ENCODE measurements at regions of chr1 and their contacts with region 1.

Region 1: DNA sequence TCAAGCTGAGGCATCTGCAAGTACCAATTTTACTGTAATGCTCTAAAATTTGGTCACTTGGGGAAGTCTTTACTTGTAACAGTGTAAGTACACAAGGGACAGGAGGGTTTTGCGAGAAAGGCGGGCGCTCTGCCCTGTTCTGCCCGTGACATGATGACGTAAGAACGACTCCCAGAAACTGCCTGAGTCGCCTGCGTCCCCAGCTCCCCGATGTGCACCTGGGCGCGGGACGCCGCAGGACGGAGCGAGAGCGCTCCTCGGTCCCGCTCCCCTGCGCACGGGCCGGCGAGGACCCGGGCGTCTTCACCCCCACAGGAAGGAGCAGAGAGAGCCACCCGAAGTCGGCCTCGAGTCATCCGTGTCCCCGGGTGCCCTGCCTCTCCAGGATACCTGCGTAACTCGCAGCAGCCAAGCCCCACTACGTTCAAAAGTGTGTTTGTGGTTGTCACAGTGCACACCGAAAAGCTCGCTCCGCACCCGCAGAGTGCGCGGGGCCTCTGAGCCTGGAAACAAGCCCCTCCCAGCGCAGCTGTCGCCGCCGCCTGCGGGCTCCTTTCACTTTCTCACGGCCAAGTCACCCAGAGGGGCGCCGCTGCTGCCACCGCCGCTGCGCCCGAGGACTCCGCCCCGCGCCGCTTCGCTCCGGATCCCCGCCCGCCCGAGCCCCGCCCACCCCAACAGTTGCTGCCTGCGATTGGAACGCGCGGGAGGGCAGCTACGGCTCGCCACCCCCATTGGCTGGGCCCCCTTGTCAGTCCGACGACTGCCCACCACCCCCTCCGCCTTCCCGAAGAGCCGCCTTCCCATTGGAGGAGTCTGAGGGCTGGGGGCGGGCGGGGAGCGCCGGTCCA is 3.2 kb upstream of the ZBTB18 start:
- DNase-seq: peak; percentile 98
- H3K4me3 Mint-ChIP-seq: peak overlapping the region; percentile 94
- H3K27ac Mint-ChIP-seq: peak overlapping the region; percentile 97
- H3K4me1 Mint-ChIP-seq: peaks cover 41% of the 10 kb centered on the region
- H3K27me3 Mint-ChIP-seq: no peaks in the 10 kb centered on the region

Region 2: DNA sequence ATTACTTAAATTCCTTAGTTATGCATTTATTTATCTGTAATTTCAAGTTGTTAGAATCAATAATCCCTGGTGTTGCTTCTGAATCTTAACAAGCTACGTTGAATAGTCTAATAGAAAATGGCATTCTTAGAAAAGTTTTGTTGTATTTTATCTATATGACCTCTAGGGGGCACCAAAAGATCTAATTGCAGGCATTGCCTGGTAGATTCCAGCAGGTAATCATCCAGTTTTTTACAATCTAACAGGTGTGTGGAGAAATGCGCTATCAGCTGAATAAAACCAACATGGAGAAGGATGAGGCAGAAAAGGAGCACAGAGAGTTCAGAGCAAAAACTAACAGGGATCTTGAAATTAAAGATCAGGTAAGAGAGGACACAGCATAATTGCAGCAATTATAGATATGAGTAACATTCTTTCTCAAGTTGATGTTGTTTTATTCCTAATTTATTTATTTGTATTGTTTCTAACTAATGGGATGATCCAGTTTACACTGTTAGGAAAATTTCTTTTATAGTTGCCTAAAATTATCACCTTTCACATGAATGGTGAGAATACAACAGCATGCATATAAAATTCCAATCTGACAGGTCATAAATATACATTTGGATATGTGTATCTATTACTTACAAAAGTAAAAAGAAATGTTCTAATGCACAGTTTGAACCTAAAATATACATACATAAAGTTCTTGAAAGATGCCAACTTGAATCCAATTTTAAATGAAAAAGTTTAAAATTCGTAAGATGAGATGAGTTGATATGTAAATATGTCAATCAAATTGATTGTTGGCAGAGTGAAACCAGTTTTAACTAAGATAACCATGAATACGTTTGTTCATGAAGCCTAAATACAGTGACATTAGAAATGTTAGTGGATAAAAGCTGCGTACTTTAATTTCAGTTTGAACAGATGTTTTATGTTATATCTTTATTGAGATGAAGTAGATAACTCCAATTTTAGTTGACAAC is 703.6 kb before region 1 on chr1:
- CTCF ChIA-PET with region 1: interaction called, 3 read pairs
- POLR2A ChIA-PET with region 1: no interaction called
- intact Hi-C with region 1: loop called (anchors 10 kb)
- DNase-seq: no peak
- H3K4me3 Mint-ChIP-seq: no peak overlapping the region
- H3K27ac Mint-ChIP-seq: no peak overlapping the region
- H3K4me1 Mint-ChIP-seq: peaks cover 2% of the 10 kb centered on the region
- H3K27me3 Mint-ChIP-seq: no peaks in the 10 kb centered on the region

Region 3: DNA sequence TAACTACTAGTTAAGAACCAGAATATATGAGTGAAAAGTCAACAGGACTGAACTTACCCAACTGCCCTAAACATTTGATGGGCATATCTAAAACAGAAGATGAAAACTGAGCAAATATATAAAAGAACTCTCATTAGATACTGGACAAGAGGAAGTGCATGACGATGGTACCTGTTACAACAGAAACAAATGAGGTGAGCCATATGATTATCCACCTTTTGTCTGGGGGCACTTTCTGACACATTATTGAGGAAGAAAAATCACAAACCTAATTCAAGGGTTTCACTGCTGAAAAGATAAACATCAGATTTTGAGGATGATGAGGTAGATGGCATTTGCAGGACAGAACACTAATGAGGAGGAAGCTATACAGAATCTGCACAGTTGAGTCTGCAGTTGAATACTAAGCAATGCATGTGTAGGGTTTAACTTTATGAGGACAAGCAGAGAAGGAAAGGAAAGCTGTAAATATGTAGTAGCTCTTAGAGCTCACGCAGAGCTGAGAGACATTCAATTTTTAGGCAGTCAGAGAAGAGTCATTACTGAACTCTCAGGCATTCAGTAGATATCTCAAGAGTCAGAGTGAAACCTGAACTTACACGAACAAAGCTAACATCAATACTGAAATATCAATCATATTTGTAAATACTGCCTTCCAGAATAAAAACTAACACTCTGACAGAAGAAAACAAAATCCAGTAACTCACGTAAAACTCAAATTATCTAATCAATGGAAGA is 459.9 kb before region 1 on chr1:
- CTCF ChIA-PET with region 1: no interaction called
- POLR2A ChIA-PET with region 1: no interaction called
- intact Hi-C with region 1: loop called (anchors 2 kb)
- DNase-seq: no peak
- H3K4me3 Mint-ChIP-seq: no peak overlapping the region
- H3K27ac Mint-ChIP-seq: peak overlapping the region; percentile 9
- H3K4me1 Mint-ChIP-seq: peaks cover 19% of the 10 kb centered on the region
- H3K27me3 Mint-ChIP-seq: no peaks in the 10 kb centered on the region

Region 4: GRCh38 chr1:244074559-244075171 is 26.8 kb after region 1 on chr1:
- CTCF ChIA-PET with region 1: interaction called, 3 read pairs
- POLR2A ChIA-PET with region 1: interaction called, 3 read pairs
- intact Hi-C with region 1: loop called (anchors 1 kb)
- DNase-seq: peak; percentile 71
- H3K4me3 Mint-ChIP-seq: peak overlapping the region; percentile 59
- H3K27ac Mint-ChIP-seq: peak overlapping the region; percentile 5
- H3K4me1 Mint-ChIP-seq: peaks cover 24% of the 10 kb centered on the region
- H3K27me3 Mint-ChIP-seq: no peaks in the 10 kb centered on the region

Region 5: DNA sequence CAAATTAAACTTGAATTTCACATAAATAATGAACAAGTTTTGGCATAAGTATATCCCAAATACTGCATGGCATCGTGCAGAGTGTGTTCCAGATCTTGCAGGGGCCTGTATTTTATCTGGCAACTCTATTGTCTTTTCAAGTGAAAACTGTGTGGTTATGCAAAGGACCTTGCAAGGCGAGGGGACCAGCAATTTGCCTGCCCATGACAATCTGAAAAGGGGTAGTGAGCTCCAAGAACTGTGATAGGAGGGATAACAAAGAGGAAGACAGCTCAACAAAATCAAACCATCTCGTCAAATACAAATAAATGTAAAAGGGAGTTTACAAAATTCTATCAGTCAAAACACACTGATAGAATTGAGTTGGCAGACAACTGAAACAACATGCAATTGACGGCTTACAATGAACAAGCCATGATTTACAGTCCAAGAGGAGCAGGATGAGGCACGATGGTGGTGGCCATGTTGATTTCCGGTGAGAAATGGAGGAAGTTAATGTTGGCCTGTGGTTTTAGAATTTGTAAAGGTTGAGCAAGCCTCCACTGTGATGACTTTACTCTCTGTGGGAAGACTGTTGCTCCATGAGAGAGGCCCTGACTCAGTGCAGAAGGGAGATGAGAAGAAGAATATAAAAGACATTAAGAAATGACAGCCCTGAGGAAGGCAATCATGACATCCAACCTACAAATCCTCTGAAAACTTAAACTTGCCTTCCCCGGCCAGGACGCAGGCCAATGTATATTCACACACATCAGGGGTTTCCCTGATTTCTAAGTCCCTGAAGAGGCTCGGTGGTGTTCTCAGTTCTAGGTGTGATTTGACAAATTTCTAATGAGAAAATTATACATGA is 271.7 kb after region 1 on chr1:
- CTCF ChIA-PET with region 1: no interaction called
- POLR2A ChIA-PET with region 1: interaction called, 3 read pairs
- intact Hi-C with region 1: loop called (anchors 1 kb)
- DNase-seq: peak; percentile 78
- H3K4me3 Mint-ChIP-seq: no peak overlapping the region
- H3K27ac Mint-ChIP-seq: peak overlapping the region; percentile 64
- H3K4me1 Mint-ChIP-seq: peaks cover 29% of the 10 kb centered on the region
- H3K27me3 Mint-ChIP-seq: no peaks in the 10 kb centered on the region

Region 6: GRCh38 chr1:244652699-244653466 is 605.0 kb after region 1 on chr1 and contains the start of gene DESI2:
- CTCF ChIA-PET with region 1: no interaction called
- POLR2A ChIA-PET with region 1: no interaction called
- intact Hi-C with region 1: loop called (anchors 1 kb)
- DNase-seq: peak; percentile 98
- H3K4me3 Mint-ChIP-seq: peak within 1 kb of the TSS; percentile 79
- H3K27ac Mint-ChIP-seq: peak within 1 kb of the TSS; percentile 79
- H3K4me1 Mint-ChIP-seq: peaks cover 22% of the 10 kb centered on the region
- H3K27me3 Mint-ChIP-seq: no peaks in the 10 kb centered on the region
- total RNA-seq, gene DESI2: 24.8 to 25.6 TPM

Measured in activated CD4-positive, alpha-beta memory T cell treated with anti-CD3 and anti-CD28 coated beads for 36 hours (primary cell).